ENCODE measurements at regions of chr3 and their contacts with region 1.

Region 1: GRCh38 chr3:179451265-179452175 is at the start of gene GNB4:
- DNase-seq: peak; percentile 32 to 82 (median 56)
- ATAC-seq: peak; percentile 79 to 92 (median 90)
- H3K4me3 ChIP-seq: peak within 1 kb of the TSS; percentile 29 to 66 (median 50)
- H3K27ac ChIP-seq: peak within 1 kb of the TSS in 3 of 4 donors; percentile 44 to 84 (median 69)
- H3K4me1 ChIP-seq: no peaks in the 10 kb centered on the region
- H3K27me3 ChIP-seq: peaks cover 0 to 15% (median 0%) of the 10 kb centered on the region in 4 donors
- CTCF ChIP-seq: no peak
- total RNA-seq, gene GNB4: 0.97 to 14.3 (median 2.9) TPM

Region 2: DNA sequence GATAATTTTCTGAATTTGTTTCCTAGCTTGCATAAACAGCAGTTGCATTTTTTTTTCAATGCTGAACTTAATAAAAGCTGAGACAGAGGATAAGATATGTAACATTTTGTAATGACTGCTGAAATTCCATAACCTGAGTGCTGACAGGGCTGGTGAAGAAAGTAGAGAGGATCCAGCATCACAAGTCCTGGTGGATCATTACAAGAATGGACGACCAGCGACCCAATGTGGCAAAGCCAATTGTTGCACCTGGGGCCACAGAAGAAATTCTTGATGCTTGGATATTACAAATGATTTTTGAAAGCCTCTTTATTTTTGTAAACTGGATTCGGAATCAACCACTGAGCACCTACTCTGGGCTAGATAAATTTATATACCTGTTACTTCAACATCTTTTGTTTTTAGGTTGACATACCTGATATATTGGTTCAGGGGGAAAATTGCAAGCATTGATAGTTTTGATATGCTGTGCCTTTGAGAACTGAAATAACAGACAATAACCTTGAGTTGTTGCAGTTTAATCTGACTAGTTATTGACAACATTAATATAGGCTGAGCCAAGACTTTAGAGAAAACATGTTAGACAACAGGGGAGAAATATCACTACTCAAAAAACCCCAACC is 107.3 kb after region 1 on chr3:
- intact Hi-C with region 1: loop called in 1 of 3 experiments (anchors 10 kb)
- DNase-seq: peak in 4 of 6 donors; percentile 13 to 54 (median 32)
- ATAC-seq: no peak
- H3K4me3 ChIP-seq: no peak overlapping the region
- H3K27ac ChIP-seq: no peak overlapping the region
- H3K4me1 ChIP-seq: peaks cover 0 to 2% (median under 1%) of the 10 kb centered on the region in 3 donors
- H3K27me3 ChIP-seq: no peaks in the 10 kb centered on the region
- CTCF ChIP-seq: peak in 3 of 4 donors; percentile 46 to 49 (median 48)

Measured in pancreas (tissue), 10 donors.